ENCODE measurements at regions of chr14 and their contacts with region 1.

Region 1: GRCh38 chr14:102593062-102593824 is 794 bp downstream of the RCOR1 start:
- DNase-seq: peak in 1 of 2 experiments; percentile 73
- H3K4me3 ChIP-seq: peak overlapping the region; percentile 77 to 96 (median 80)
- H3K27ac ChIP-seq: no peak overlapping the region
- H3K4me1 ChIP-seq: peaks cover 3 to 21% (median 10%) of the 10 kb centered on the region in 4 experiments; a peak in 6 of 7 replicates
- H3K27me3 ChIP-seq: no peaks in the 10 kb centered on the region
- CTCF ChIP-seq: peak; percentile 1 to 21 (median 10); a peak in 3 of 4 replicates
- EP300 ChIP-seq: no peak
- POLR2A ChIP-seq: no peak
- RAD21 ChIP-seq: peak; percentile 9 to 29; a peak in 1 of 4 replicates

Region 2: GRCh38 chr14:102539580-102540314 is 53.5 kb before region 1 on chr14:
- CTCF ChIA-PET with region 1: interaction called, 15 read pairs
- POLR2A ChIA-PET with region 1: interaction called, 5 read pairs
- DNase-seq: no peak
- H3K4me3 ChIP-seq: no peak overlapping the region
- H3K27ac ChIP-seq: no peak overlapping the region
- H3K4me1 ChIP-seq: peaks cover 0 to 12% (median 7%) of the 10 kb centered on the region in 4 experiments; a peak in 6 of 7 replicates
- H3K27me3 ChIP-seq: peaks cover 0 to 5% (median 2%) of the 10 kb centered on the region in 4 experiments; a peak in 4 of 7 replicates
- CTCF ChIP-seq: no peak
- EP300 ChIP-seq: no peak
- POLR2A ChIP-seq: no peak
- RAD21 ChIP-seq: no peak

Region 3: GRCh38 chr14:102629808-102630350 is 36.6 kb after region 1 on chr14:
- CTCF ChIA-PET with region 1: interaction called, 12 read pairs
- POLR2A ChIA-PET with region 1: interaction called, 5 read pairs
- DNase-seq: peak in 1 of 2 experiments; percentile 48
- H3K4me3 ChIP-seq: no peak overlapping the region; a peak in 1 of 8 replicates
- H3K27ac ChIP-seq: no peak overlapping the region
- H3K4me1 ChIP-seq: peaks cover 0 to 15% (median 13%) of the 10 kb centered on the region in 4 experiments
- H3K27me3 ChIP-seq: no peaks in the 10 kb centered on the region
- CTCF ChIP-seq: no peak
- EP300 ChIP-seq: no peak
- POLR2A ChIP-seq: no peak
- RAD21 ChIP-seq: no peak

Region 4: GRCh38 chr14:102662636-102663430 is 69.6 kb after region 1 on chr14:
- CTCF ChIA-PET with region 1: interaction called, 10 read pairs
- POLR2A ChIA-PET with region 1: interaction called, 9 read pairs
- DNase-seq: peak in 1 of 2 experiments; percentile 46
- H3K4me3 ChIP-seq: peak overlapping the region in 1 of 4 experiments; percentile 36; a peak in 1 of 8 replicates
- H3K27ac ChIP-seq: peak overlapping the region; percentile 46; the same call in 1 of the 2 replicates
- H3K4me1 ChIP-seq: peaks cover 5 to 19% (median 10%) of the 10 kb centered on the region in 4 experiments
- H3K27me3 ChIP-seq: no peaks in the 10 kb centered on the region
- CTCF ChIP-seq: no peak
- EP300 ChIP-seq: no peak
- POLR2A ChIP-seq: peak in 1 of 2 experiments; percentile 67; a peak in 1 of 3 replicates
- RAD21 ChIP-seq: no peak